ENCODE measurements at regions of chr9 and their contacts with region 1.

Region 1: DNA sequence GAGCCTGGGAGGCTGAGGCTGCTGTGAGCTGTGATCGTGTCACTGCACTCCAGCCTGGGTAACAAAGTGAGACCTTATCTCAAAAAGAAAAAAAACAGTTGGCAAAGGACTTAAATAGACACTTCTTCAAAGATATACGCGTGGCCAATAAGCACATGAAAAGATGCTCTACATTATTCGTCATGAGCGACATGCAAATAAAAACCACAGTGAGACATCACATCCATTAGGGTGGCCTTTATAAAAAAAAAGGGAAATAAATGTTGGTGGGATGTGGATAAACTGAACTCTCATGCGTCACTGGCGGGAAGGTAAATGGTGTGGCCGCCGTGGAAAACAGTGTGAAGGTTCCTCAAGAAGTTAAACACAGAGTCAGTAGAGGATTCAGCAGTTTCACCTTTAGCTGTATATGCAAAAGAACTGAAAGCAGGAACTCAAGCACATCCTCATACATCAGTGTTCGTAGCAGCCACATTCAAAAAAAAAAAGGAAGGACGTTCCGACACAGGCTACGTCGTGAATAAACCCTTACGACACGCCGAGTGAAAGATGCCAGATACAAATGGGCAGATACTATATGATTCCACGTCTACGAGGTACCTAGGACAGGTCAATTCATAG is 24.5 kb upstream of the NRARP start:
- DNase-seq: peak; percentile 28

Region 2: DNA sequence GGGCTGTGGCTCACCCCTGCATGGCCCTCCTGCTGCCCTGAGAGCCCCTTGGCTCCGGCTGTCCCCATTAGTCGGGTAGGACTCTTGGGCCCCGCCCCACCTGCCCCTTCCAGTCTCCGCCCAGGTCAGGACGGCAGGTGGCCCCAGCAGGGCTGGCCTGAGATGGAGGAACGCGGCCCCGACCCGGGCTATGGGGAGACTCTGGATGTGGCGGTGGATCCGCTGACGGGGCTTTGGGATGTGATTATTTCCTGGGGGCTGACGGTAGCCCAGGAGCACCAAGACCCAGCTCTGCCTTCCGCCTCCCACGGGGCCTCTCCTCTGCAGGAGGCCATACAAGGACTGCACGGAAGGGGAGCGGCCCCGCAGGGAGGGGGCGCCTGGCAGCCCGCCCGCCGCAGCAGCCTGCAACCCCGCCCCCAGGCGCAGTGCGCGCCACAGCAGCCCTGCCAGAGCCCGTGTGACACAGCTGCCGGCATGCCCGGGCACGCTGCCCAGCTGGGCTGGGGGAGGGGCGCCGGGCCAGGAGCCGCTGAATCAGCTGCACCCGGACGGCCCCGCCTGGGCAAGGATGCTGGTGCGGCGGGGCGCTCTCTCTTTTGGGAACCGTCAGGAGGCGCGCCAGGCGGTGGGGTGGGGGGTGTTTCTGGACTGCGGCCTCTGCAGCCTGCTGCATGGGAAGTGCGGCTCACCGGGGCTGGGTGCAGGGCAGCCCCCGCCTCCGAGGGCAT is 1217.0 kb before region 1 on chr9:
- intact Hi-C with region 1: no loop called
- DNase-seq: peak; percentile 97

Region 3: DNA sequence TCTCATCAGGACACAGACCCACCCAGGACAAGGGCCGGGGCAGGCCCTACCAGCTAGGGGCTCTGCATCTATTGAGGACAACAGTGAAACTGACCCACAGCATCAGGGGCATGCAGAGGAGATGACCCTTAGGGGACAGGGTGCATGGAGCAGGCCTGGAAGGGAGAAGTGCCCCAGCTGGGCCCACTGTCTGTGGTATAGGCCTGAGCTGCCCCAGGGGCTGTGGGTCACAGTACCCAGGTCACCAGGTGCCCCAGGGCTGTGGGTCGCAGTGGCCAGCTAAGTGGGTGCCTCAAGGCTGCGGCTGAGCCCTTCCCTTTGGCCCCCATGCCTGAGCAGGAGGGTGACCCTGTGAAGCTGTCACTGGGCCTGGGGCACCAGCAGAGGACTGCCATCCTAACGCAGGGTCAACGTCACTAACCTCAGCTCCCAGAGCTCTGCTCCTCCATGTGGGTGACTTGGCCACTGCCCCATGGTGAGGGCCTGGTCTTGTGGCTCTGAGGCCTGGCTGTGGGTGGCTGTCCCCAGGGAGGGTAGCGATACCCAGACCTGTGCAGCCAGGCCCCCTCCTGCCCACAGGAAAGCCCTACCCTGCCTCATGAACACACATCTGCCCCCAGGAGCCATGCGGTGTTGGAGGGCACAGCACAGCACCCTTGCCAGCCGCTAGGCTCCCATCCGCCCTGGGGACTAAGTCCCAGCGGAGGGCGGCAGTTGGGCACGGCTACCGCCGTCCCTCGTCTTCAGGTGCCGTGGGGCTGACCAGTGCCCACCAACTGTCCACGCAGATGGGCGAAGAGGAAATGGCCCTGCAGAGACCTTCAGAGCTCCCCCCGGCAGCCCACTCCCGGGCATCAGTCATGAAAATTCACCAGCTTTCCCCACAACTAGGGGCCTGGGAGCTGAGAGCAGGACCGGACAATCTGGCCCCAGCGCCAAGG is 465.4 kb before region 1 on chr9:
- intact Hi-C with region 1: loop called in 1 of 2 experiments (anchors 5 kb)
- DNase-seq: no peak

Region 4: GRCh38 chr9:137666955-137667670 is 340.6 kb after region 1 on chr9:
- intact Hi-C with region 1: loop called in 1 of 2 experiments (anchors 5 kb)
- DNase-seq: peak; percentile 66

Measured in posterior vena cava (tissue), 2 donors.